ENCODE measurements at regions of chr4 and their contacts with region 1.

Region 1: DNA sequence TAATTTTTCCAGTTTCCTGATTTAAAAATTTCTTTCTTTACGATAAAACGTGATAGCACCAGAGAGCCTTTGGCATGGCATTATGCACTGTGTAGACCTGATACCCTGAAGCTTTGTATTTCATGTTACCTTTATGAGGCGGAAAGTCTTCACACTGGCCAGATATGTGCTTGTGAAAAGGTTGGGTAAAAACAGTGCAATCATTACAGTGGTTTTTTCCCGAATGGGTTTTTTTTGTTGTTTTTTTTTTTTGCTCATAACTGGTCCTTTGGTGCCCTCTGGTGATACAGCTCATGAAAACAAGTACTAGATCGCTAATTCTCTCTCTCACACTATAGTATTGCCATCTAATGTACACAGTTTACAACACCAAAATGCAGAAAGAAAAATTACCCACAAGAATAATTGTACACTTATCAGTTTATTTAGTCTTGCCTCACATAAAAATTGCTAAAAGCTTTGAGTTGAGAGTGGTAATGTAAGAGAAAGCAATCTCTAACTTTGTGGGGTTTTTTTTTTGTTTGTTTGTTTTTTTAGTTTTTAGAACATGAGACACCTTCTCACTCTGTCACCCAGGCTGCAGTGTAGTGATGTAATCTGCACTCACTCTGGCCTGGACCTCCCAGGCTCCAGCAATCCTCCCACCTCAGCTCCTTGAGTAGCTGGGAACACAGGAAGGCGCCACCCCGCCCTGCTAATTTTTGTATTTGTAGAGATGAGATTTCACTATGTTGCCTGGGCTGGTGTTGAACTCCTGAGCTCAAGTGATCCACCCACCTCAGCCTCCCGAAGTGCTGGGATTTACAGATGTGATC is 21.3 kb downstream of the SPCS3 start:
- DNase-seq: peak in 4 of 5 donors; percentile 20 to 46 (median 38)
- H3K4me3 ChIP-seq: no peak overlapping the region
- H3K4me3 Mint-ChIP-seq: peak overlapping the region in 1 of 8 donors; percentile 36
- H3K27ac ChIP-seq: no peak overlapping the region
- H3K27ac Mint-ChIP-seq: no peak overlapping the region
- H3K4me1 ChIP-seq: peaks cover 4% of the 10 kb centered on the region
- H3K4me1 Mint-ChIP-seq: peaks cover 0 to 14% (median 6%) of the 10 kb centered on the region in 4 donors
- H3K27me3 ChIP-seq: no peaks in the 10 kb centered on the region
- H3K27me3 Mint-ChIP-seq: no peaks in the 10 kb centered on the region

Region 2: DNA sequence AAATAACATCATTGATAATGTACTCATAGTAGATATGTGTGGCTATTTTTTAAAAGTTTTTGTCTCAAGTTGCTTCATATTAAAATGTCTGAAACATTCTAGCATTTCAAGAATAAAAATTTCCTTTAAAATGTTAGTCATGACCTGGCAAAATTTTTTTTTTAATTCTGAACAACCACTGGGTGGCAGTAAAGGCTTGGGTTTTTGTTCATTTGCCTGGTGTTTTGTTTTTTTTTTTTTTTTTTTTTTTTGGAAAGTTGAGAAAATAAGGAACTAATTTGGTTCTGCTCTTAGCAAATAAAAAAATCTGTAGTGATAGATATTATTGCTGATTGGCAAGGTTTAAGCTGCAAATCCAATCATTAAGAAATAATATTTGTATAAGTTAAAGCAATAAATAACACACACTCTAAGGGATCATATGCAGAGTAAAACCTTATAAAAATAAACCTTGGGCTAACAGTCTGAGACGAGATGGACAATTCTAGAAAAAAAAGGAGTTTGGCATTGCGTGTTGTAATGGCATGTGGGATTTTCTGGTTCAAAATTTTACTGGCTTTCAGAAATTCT is 1976.0 kb before region 1 on chr4:
- CTCF ChIA-PET with region 1: no interaction called
- POLR2A ChIA-PET with region 1: no interaction called
- intact Hi-C with region 1: loop called (anchors 5 kb)
- DNase-seq: peak in 4 of 5 donors; percentile 0 to 19 (median 16)
- H3K4me3 ChIP-seq: no peak overlapping the region
- H3K4me3 Mint-ChIP-seq: no peak overlapping the region
- H3K27ac ChIP-seq: no peak overlapping the region
- H3K27ac Mint-ChIP-seq: no peak overlapping the region
- H3K4me1 ChIP-seq: no peaks in the 10 kb centered on the region
- H3K4me1 Mint-ChIP-seq: no peaks in the 10 kb centered on the region
- H3K27me3 ChIP-seq: no peaks in the 10 kb centered on the region
- H3K27me3 Mint-ChIP-seq: peaks cover 0 to 4% of the 10 kb centered on the region in 2 donors

Region 3: GRCh38 chr4:175947117-175947722 is 393.9 kb before region 1 on chr4:
- CTCF ChIA-PET with region 1: interaction called, 18 read pairs
- POLR2A ChIA-PET with region 1: no interaction called
- intact Hi-C with region 1: no loop called
- DNase-seq: peak in 2 of 5 donors; percentile 1 to 3
- H3K4me3 ChIP-seq: no peak overlapping the region
- H3K4me3 Mint-ChIP-seq: no peak overlapping the region
- H3K27ac ChIP-seq: no peak overlapping the region
- H3K27ac Mint-ChIP-seq: no peak overlapping the region
- H3K4me1 ChIP-seq: no peaks in the 10 kb centered on the region
- H3K4me1 Mint-ChIP-seq: peaks cover 4 to 7% (median 6%) of the 10 kb centered on the region in 4 donors
- H3K27me3 ChIP-seq: no peaks in the 10 kb centered on the region
- H3K27me3 Mint-ChIP-seq: peaks cover 1 to 3% of the 10 kb centered on the region in 2 donors

Region 4: DNA sequence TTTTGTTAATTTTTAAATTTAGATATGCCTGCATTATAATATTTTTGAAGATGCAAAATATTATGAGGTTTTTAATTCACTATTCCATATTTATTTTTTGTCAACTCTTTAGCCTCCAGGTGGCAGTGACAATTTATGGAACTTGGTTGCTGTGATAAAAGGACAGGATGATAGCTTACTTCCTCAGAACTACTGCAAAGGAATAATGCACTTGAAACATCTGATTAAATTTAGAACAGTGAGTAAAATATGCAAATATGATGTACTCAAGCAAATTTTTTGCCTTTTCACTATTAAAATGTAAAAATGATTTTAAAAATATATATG is 190.8 kb before region 1 on chr4:
- CTCF ChIA-PET with region 1: interaction called, 36 read pairs
- POLR2A ChIA-PET with region 1: no interaction called
- intact Hi-C with region 1: loop called (anchors 1 kb)
- DNase-seq: peak in 2 of 5 donors; percentile 1 to 2
- H3K4me3 ChIP-seq: no peak overlapping the region
- H3K4me3 Mint-ChIP-seq: no peak overlapping the region
- H3K27ac ChIP-seq: no peak overlapping the region
- H3K27ac Mint-ChIP-seq: no peak overlapping the region
- H3K4me1 ChIP-seq: no peaks in the 10 kb centered on the region
- H3K4me1 Mint-ChIP-seq: no peaks in the 10 kb centered on the region
- H3K27me3 ChIP-seq: no peaks in the 10 kb centered on the region
- H3K27me3 Mint-ChIP-seq: no peaks in the 10 kb centered on the region

Region 5: DNA sequence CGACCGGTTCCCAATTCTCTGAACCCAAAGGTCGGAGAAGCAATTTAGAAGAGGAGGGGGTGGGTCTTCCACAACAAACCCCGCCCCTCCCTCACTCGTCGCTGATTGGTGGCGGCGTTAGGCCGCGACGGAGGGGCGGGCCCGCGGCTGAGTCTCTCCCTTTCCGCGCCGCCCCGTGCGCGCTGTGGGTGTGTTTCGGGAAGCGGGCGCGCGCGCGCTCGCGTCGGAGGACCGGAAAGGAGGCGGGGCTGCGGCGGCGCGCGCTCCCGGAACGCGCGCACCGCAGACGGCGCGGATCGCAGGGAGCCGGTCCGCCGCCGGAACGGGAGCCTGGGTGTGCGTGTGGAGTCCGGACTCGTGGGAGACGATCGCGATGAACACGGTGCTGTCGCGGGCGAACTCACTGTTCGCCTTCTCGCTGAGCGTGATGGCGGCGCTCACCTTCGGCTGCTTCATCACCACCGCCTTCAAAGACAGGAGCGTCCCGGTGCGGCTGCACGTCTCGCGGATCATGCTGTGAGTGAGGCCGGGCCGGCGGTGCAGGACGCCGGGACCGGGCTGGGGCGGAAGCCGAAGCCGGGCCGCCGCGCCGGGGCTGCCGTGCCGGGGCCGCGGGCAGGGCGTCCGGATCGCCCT is 21.3 kb before region 1 on chr4 and contains the start of gene SPCS3:
- CTCF ChIA-PET with region 1: interaction called, 7 read pairs
- POLR2A ChIA-PET with region 1: no interaction called
- intact Hi-C with region 1: loop called (anchors 2 kb)
- DNase-seq: peak; percentile 92 to 95 (median 94)
- H3K4me3 ChIP-seq: peak within 1 kb of the TSS; percentile 40 to 59
- H3K4me3 Mint-ChIP-seq: peak within 1 kb of the TSS; percentile 93 to 98 (median 95)
- H3K27ac ChIP-seq: peak within 1 kb of the TSS; percentile 95
- H3K27ac Mint-ChIP-seq: peak within 1 kb of the TSS; percentile 95 to 98 (median 96)
- H3K4me1 ChIP-seq: peaks cover 49% of the 10 kb centered on the region
- H3K4me1 Mint-ChIP-seq: peaks cover 29 to 60% (median 40%) of the 10 kb centered on the region in 4 donors
- H3K27me3 ChIP-seq: no peaks in the 10 kb centered on the region
- H3K27me3 Mint-ChIP-seq: no peaks in the 10 kb centered on the region
- total RNA-seq, gene SPCS3: 193 to 207 TPM